Activated CD4-positive, alpha-beta memory T cell treated with anti-CD3 and anti-CD28 coated beads, Interleukin-2, amount 10 ng/mL, durations not matched to agents 7 days and 5 days (primary cell): ENCODE measurements at regions of chr1 and their contacts with region 1.

Region 1: GRCh38 chr1:110338886-110339406 is at the start of gene RBM15:
- DNase-seq: peak; percentile 98
- H3K4me3 Mint-ChIP-seq: no peak within 1 kb of the TSS
- H3K27ac Mint-ChIP-seq: no peak within 1 kb of the TSS
- H3K4me1 Mint-ChIP-seq: peaks cover 60% of the 10 kb centered on the region
- H3K27me3 Mint-ChIP-seq: no peaks in the 10 kb centered on the region
- total RNA-seq, gene RBM15: 63.4 to 68.1 TPM

Region 2: GRCh38 chr1:110034451-110035235 is 304.3 kb before region 1 on chr1 and contains the start of gene STRIP1:
- CTCF ChIA-PET with region 1: interaction called, 6 read pairs
- POLR2A ChIA-PET with region 1: interaction called, 19 read pairs
- DNase-seq: peak; percentile 95
- H3K4me3 Mint-ChIP-seq: peak within 1 kb of the TSS; percentile 90
- H3K27ac Mint-ChIP-seq: peak within 1 kb of the TSS; percentile 74
- H3K4me1 Mint-ChIP-seq: peaks cover 62% of the 10 kb centered on the region
- H3K27me3 Mint-ChIP-seq: no peaks in the 10 kb centered on the region
- total RNA-seq, gene STRIP1: 34.1 to 34.7 TPM

Region 3: DNA sequence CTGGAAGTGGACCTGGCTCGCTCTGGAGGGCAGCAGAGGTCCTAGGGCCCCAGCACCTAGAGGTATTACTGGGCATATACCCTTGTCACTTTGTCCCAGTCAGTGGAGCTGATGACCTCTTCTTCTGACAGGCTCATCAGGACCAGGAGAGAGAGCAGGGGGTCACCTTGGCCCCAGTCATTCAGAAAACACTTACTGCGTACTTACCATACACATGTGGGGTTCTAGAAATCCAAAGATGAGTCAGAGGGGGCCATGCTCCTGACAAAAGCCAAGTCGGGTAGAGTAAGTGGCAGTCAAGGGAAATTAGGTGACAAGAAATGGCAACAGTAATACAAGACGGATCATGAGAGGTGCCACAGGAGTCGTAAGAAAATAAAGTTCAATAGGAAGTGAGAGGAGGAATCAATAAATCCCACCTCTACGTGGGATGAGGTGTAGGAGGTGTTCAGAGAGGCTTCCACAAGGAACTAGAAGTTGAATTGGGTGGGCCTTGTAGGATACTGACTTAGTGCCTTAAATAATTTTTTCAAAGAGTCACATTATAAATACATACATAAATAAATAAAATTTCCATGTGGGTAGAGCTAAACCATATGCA is 122.0 kb before region 1 on chr1:
- CTCF ChIA-PET with region 1: no interaction called
- POLR2A ChIA-PET with region 1: interaction called, 142 read pairs
- DNase-seq: no peak
- H3K4me3 Mint-ChIP-seq: no peak overlapping the region
- H3K27ac Mint-ChIP-seq: no peak overlapping the region
- H3K4me1 Mint-ChIP-seq: peaks cover 33% of the 10 kb centered on the region
- H3K27me3 Mint-ChIP-seq: peaks cover 7% of the 10 kb centered on the region

Region 4: GRCh38 chr1:110384581-110385321 is 45.8 kb after region 1 on chr1:
- CTCF ChIA-PET with region 1: interaction called, 3 read pairs
- POLR2A ChIA-PET with region 1: interaction called, 41 read pairs
- DNase-seq: no peak
- H3K4me3 Mint-ChIP-seq: no peak overlapping the region
- H3K27ac Mint-ChIP-seq: peak overlapping the region; percentile 77
- H3K4me1 Mint-ChIP-seq: peaks cover 27% of the 10 kb centered on the region
- H3K27me3 Mint-ChIP-seq: no peaks in the 10 kb centered on the region

Region 5: DNA sequence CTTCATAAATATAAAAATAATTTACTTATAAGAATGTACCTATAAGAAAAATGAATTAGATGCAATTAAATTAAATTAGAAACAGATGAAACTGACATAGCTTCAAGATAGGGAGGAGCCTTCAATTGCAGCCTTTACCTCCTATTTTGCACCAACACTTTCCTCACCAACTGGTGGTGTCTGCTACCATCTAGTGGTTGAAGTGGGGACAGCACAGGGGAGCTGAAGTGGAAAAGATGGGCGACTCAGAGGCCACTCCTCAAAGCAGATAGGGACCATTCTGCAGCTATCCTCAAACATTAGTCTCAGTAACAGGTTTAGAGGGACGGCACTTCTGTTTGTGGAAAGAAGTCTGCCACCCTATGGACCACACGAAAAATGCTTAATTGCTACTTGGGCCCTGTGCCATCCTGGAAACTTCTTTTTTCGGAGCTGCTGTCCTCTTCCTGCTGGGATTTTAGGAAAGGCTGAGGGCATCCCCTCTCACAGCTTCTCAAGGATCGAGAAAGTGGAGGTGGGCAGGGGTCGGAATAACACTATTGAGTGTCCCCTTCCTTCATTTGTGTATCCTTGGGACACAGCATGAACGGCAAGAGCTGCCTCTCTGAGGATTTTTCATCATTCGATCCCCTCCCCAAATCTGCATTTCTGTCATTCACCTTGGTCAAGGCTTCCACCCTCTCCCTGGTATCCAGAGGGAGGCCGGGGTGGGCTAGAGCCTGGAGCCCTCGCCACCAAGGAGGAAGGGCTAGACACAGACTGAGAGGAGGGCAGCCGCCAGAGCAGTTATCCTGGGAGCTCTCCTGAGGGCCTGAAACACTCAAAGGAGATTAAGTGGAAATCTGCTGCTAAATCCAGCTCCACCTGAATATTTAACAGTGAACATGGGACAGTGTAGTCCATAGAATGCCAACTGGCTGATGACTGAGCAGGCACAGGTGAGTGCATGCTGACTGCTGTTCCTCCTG is 121.6 kb after region 1 on chr1:
- CTCF ChIA-PET with region 1: interaction called, 26 read pairs
- POLR2A ChIA-PET with region 1: interaction called, 5 read pairs
- DNase-seq: peak; percentile 85
- H3K4me3 Mint-ChIP-seq: no peak overlapping the region
- H3K27ac Mint-ChIP-seq: no peak overlapping the region
- H3K4me1 Mint-ChIP-seq: no peaks in the 10 kb centered on the region
- H3K27me3 Mint-ChIP-seq: no peaks in the 10 kb centered on the region

Region 6: GRCh38 chr1:110879758-110880606 is 541.0 kb after region 1 on chr1:
- CTCF ChIA-PET with region 1: no interaction called
- POLR2A ChIA-PET with region 1: interaction called, 28 read pairs
- DNase-seq: peak; percentile 82
- H3K4me3 Mint-ChIP-seq: peak overlapping the region; percentile 97
- H3K27ac Mint-ChIP-seq: peak overlapping the region; percentile 100
- H3K4me1 Mint-ChIP-seq: peaks cover 63% of the 10 kb centered on the region
- H3K27me3 Mint-ChIP-seq: no peaks in the 10 kb centered on the region